ENCODE measurements at regions of chr20 and their contacts with region 1.

Region 1: DNA sequence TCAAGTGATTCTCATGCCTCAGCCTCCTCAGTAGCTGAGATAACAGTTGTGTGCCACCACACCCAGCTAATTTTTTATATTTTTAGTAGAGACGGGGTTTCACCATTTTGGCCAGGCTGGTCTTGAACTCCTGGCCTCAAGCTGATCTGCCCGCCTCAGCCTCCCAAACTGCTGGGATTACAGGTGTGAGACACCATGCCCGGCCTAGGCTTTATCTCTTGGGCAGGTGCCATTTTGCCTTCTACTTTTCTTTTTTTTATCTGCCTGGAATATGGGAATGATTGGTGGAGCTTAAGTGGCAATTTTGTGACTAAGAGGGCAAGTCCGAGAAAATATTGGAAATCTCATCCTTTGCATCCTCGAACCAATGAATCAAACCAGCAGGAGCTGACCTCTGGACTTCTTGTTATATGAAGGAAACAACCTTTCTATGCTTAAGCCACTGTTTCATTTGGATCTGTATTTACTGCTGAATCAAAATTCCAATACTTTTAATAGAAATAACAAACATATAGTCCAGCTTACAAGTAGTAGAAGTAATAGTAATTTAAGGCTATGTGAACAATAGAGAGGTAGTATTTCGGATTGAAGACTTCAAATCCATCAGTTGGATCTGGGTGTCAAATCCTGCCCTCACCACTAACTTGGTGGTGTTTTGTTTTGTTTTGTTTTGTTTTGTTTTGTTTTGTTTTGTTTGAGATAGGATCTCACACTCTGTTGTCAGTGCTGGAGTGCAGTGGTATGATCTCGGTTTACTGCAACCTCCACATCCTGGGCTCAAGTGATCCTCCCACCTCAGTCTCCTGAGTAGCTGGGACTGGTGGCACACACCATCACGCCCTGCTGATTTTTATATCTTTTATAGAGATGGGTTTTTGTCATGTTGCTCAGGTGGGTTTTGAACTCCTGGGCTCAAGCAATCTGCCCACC is 129.1 kb upstream of the ZNF217 start:
- DNase-seq: no peak
- ATAC-seq: no peak
- H3K4me3 ChIP-seq: no peak overlapping the region
- H3K27ac ChIP-seq: no peak overlapping the region
- H3K4me1 ChIP-seq: peaks cover 0 to 4% (median 0%) of the 10 kb centered on the region in 12 donors
- H3K27me3 ChIP-seq: no peaks in the 10 kb centered on the region
- CTCF ChIP-seq: no peak
- POLR2A ChIP-seq: no peak

Region 2: GRCh38 chr20:53678990-53679596 is 43.7 kb before region 1 on chr20:
- intact Hi-C with region 1: no loop called
- DNase-seq: no peak
- ATAC-seq: peak in 2 of 4 donors; percentile 60 to 82
- H3K4me3 ChIP-seq: peak overlapping the region in 2 of 12 donors; percentile 1 to 7
- H3K27ac ChIP-seq: peak overlapping the region in 8 of 12 donors; percentile 0 to 77 (median 12)
- H3K4me1 ChIP-seq: peaks cover 0 to 39% (median 26%) of the 10 kb centered on the region in 12 donors
- H3K27me3 ChIP-seq: no peaks in the 10 kb centered on the region
- CTCF ChIP-seq: no peak
- POLR2A ChIP-seq: no peak

Region 3: DNA sequence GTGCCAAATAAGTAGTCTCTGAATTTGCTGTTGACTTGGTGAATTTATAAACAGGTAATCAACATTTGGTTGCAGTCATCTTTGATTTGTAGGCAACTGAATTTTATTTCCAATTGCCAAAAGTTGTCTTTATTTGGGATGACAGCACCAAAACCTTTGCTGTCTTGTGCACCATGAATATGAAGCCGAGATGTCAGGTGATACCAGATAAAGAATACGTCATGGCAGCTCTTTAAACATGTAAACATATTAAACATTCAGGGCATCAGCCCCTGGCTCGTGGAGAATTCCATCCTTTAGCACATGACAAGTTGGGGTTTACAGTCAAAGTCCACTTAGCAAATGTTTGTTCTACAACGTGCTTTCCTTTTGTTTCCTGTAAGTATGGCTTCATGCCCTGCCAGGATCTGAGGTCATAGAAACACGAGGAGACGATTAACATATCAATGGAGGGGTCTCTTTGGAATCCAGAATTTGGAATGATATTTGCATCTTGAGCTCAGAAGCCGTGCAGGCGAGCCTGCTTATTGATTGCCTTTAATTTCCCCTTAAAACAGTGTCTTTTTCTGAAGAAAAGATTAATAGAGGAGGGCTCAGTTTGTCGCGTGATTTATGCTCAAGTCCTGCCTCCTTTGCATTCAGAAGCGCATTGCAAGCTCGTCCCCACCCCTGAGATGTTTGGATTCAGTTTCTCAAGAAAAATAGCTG is 41.1 kb after region 1 on chr20:
- intact Hi-C with region 1: no loop called
- DNase-seq: no peak
- ATAC-seq: no peak
- H3K4me3 ChIP-seq: peak overlapping the region in 5 of 12 donors; percentile 6 to 33 (median 17)
- H3K27ac ChIP-seq: no peak overlapping the region
- H3K4me1 ChIP-seq: peaks cover 0 to 7% (median 0%) of the 10 kb centered on the region in 12 donors
- H3K27me3 ChIP-seq: no peaks in the 10 kb centered on the region
- CTCF ChIP-seq: no peak
- POLR2A ChIP-seq: no peak

Region 4: DNA sequence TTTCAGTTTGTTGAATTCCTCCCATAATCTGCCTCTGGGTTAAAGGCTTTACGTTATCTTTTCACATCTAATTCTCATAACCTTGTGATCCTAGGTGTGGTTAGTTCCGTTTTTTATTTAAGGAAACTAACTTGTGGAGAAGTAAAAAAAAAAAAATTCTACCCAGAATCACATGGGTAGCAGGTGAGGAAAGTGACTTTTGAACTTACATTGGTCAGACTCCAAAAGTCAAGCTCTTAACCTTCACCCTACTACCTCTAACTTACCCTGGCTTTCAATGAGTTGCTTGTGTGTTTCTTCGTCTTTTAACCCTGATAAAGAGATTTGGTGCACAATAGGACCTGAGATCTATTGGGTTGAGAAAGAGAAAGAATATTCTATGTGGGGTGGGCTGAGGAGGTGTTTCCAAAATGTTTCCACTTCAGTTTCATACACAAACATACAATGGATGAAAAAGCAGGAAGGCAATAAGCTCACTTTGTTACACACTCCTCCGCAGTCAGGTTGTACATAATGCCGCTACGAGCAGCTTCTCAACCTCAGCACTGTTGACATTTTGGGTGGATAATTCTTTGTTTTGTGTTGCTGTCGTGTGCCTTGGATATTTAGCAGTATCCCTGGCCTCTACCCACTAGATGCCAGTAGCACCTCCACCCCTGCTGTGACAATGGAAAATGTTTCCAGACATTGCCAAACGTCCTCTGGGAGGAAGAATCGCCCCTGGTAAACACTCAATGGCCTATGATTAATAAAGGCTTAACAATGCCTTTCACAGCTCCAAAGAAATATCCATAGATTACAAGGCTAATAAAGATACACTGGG is 63.9 kb after region 1 on chr20:
- intact Hi-C with region 1: loop called in 1 of 10 experiments (anchors 10 kb)
- DNase-seq: no peak
- ATAC-seq: no peak
- H3K4me3 ChIP-seq: no peak overlapping the region
- H3K27ac ChIP-seq: no peak overlapping the region
- H3K4me1 ChIP-seq: peaks cover 0 to 21% (median 0%) of the 10 kb centered on the region in 12 donors
- H3K27me3 ChIP-seq: no peaks in the 10 kb centered on the region
- CTCF ChIP-seq: no peak
- POLR2A ChIP-seq: no peak

Measured in heart left ventricle (tissue), 16 donors.